Transverse colon (tissue), 4 donors: ENCODE measurements at regions of chrX and their contacts with region 1.

Region 1: DNA sequence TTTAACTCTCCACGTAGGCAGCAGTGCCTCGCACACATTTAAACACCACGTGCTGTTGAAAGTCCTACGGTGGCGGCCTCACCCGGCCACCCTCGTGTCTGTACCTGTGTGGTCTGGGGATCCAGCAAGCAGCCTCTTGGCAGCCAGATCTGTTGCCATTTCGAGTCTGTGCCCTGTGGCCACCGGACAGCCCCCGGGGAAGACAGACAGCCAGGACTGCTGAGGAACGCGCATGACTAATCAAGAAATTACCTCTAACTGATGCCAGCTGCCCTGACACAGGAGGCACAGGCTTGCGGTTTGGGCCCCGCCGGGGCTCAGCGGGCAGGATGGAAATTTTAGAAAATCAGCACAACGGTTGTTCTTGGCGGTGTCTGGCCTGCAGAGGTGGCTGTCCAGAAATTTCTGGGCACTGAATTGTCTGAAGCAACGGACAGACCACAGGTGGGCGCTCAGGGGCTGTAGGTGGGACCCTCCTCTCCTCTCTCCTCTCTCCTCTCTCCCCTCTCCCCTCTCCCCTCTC is 15.6 kb upstream of the ASMTL start:
- DNase-seq: peak; percentile 71
- H3K4me3 ChIP-seq: no peak overlapping the region
- H3K27ac ChIP-seq: peak overlapping the region in 3 of 4 donors; percentile 39 to 69 (median 54)
- H3K4me1 ChIP-seq: no peaks in the 10 kb centered on the region
- H3K27me3 ChIP-seq: peaks cover 7% of the 10 kb centered on the region
- CTCF ChIP-seq: no peak
- EP300 ChIP-seq: no peak
- POLR2A ChIP-seq: no peak

Region 2: DNA sequence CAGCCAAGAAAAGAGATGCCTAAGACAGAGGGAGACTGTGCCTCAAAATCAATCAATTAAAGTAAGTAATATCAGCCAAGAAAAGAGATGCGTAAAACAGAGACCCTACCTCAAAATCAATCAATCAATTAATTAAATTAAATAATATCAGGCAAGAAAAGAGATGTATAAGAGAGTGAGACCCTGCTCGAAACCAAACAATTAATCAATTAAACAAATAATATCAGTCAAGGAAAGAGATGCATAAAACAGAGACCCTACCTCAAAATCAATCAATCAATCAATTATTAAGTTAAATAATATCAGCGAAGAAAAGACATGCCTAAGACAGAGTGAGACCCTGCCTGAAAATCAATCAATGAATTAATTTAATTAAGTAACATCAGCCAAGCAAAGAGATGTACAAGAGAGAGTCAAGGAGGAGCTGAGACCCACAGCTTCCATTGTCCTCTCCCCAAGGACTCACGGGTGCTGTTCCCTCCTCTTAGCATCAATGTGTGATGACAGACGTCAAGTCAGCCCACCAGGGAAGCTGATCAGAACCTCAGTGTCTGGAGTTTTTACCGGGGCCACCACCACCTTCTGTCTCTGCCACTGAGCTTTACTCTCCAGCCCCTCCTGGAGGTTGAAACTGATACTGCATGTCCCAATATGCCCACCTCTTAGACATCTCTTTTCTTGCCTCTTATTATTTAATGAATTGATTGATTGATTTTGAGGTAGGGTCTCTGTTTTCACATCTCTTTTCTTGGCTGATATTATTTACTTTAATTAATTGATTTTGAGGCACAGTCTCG is 112.6 kb after region 1 on chrX:
- in situ Hi-C with region 1: loop called in 2 of 4 experiments (anchors 10 to 25 kb)
- intact Hi-C with region 1: no loop called
- DNase-seq: peak; percentile 65
- H3K4me3 ChIP-seq: no peak overlapping the region
- H3K27ac ChIP-seq: no peak overlapping the region
- H3K4me1 ChIP-seq: peaks cover 0 to 3% (median 0%) of the 10 kb centered on the region in 4 donors
- H3K27me3 ChIP-seq: no peaks in the 10 kb centered on the region
- CTCF ChIP-seq: peak; percentile 69 to 91 (median 78)
- EP300 ChIP-seq: no peak
- POLR2A ChIP-seq: no peak

Region 3: GRCh38 chrX:1629244-1629643 is 160.9 kb after region 1 on chrX:
- in situ Hi-C with region 1: no loop called
- intact Hi-C with region 1: no loop called
- DNase-seq: no peak
- H3K4me3 ChIP-seq: no peak overlapping the region
- H3K27ac ChIP-seq: no peak overlapping the region
- H3K4me1 ChIP-seq: no peaks in the 10 kb centered on the region
- H3K27me3 ChIP-seq: no peaks in the 10 kb centered on the region
- CTCF ChIP-seq: no peak
- EP300 ChIP-seq: no peak
- POLR2A ChIP-seq: no peak